Activated CD8-positive, alpha-beta T cell treated with anti-CD3 and anti-CD28 coated beads for 36 hours (primary cell): ENCODE measurements at regions of chr2 and their contacts with region 1.

Region 1: GRCh38 chr2:157327621-157328500 is 2.2 kb upstream of the ERMN start:
- DNase-seq: peak; percentile 95
- ATAC-seq: peak; percentile 93
- H3K4me3 Mint-ChIP-seq: peak overlapping the region; percentile 45
- H3K27ac Mint-ChIP-seq: peak overlapping the region; percentile 80
- H3K4me1 Mint-ChIP-seq: peaks cover 59% of the 10 kb centered on the region
- H3K27me3 Mint-ChIP-seq: no peaks in the 10 kb centered on the region
- CTCF ChIP-seq: peak; percentile 93

Region 2: DNA sequence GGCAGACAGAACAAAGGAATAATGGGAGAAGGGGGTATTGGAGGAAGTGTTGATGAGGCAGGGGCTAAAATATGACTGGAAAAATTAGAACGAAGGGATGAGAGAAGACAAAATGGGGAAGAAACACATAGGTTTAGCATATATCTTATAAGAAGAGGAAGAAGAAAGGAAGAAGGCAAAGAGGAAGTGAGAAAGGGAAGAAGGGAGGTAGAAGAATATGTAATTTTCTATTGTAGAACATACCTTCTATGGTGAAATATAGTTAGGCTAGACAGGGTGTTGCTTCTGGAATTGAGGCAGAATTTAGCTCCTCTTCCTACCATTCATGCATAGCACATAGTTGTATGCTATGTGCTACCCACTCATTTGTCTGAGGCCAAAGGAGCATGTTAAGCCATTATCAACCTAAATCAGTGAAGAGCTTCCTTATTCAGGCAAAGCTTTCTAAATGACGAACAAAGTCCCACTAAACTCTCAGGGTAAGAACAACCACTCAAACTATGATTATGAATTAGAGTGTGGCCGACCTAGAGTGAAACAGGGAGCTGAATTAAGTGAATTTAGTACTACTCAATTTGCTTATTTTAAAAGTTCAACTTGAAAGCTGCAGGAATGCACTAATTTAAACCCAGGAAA is 251.2 kb before region 1 on chr2:
- CTCF ChIA-PET with region 1: no interaction called
- POLR2A ChIA-PET with region 1: no interaction called
- intact Hi-C with region 1: no loop called
- DNase-seq: no peak
- ATAC-seq: no peak
- H3K4me3 Mint-ChIP-seq: no peak overlapping the region
- H3K27ac Mint-ChIP-seq: no peak overlapping the region
- H3K4me1 Mint-ChIP-seq: no peaks in the 10 kb centered on the region
- H3K27me3 Mint-ChIP-seq: no peaks in the 10 kb centered on the region
- CTCF ChIP-seq: no peak

Region 3: DNA sequence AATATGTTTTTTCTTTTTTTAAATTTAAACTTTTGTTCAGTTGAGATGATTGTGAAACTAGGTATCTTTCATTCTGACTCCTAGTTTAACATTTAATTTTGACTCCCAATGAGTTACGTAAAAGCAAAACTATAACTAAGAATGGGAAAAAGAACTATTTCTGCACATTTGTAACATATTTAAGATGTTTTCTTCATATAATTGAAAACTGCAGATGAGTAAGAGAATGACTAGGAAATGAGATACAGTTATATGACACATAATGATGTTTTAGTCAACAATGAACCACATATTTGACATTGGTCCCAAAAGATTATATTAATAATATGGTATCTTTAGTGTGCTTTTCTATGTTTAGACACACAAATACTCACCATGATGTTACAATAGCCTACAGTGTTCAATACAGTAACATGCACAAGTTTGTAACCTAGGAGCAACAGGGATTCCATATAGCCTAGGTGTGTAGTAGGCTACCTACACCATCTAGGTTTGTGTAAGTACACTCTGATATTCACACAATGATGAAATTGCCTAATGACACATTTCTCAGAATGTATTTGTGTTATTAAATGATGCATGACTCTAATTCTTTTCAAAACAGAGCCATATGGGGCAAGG is 14.9 kb before region 1 on chr2:
- CTCF ChIA-PET with region 1: interaction called, 246 read pairs
- POLR2A ChIA-PET with region 1: interaction called, 3 read pairs
- intact Hi-C with region 1: no loop called
- DNase-seq: no peak
- ATAC-seq: peak; percentile 34
- H3K4me3 Mint-ChIP-seq: no peak overlapping the region
- H3K27ac Mint-ChIP-seq: no peak overlapping the region
- H3K4me1 Mint-ChIP-seq: peaks cover 15% of the 10 kb centered on the region
- H3K27me3 Mint-ChIP-seq: no peaks in the 10 kb centered on the region
- CTCF ChIP-seq: no peak

Region 4: DNA sequence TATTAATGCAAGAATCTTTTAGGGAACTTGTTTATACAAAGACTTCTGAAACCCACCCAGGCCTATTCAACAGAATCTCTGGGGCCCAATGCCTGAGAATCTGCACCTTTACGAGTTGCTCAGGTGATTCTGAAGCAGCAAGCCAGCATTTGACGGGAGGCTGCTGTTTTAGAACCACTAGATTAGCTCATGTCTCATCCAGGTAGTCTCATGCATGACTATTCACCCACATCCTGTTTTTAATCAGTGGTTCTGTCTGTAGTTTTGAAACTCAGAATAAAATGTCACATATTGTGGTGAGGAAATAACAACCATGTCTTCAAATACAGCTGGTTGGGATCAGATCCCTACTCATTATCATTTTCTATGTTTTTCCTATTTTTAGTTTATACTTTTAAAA is 76.5 kb after region 1 on chr2:
- CTCF ChIA-PET with region 1: interaction called, 172 read pairs
- POLR2A ChIA-PET with region 1: interaction called, 8 read pairs
- intact Hi-C with region 1: no loop called
- DNase-seq: peak; percentile 78
- ATAC-seq: peak; percentile 89
- H3K4me3 Mint-ChIP-seq: peak overlapping the region; percentile 36
- H3K27ac Mint-ChIP-seq: peak overlapping the region; percentile 93
- H3K4me1 Mint-ChIP-seq: peaks cover 77% of the 10 kb centered on the region
- H3K27me3 Mint-ChIP-seq: no peaks in the 10 kb centered on the region
- CTCF ChIP-seq: no peak

Region 5: DNA sequence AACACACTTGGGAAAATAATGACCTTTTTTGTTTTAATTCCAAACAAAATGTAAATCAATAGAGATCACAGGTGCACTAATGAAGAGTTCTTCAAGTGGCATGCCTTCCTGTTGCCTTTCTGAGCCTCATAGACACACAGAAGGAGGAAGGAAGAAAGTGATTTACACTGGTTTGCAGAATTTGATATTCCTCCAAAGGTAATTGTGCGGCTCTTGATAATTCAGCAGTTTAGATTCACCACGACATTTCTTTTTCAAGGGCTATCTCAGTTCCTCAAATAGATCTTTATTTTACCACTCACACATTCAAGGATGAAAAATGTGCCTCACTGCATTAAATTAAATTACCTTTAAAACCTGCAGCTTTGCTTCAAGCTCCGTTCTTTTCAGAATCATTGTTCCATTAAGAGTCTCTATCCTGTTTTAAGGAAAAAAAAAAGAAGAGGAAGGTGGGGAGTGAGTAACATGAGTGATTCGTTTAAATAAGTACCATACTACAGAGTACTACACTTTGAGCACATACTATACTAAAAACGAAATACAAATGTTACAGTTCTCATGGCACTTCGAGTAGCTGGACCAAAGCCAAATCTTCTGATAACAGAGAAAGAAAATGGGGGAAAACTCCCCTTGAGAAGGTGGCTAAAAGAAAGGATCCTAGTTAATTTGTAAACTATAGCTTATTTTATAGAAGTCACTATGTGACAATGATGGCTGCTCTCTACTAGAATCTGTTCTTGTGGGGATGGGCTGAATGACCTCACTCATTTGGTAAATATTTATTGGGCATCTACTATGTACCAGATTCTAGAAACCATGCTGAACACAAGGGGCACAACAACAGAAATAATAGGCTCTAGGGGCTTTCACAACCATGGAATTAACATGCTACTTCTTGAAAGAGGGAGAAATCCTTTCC is 99.4 kb after region 1 on chr2:
- CTCF ChIA-PET with region 1: interaction called, 49 read pairs
- POLR2A ChIA-PET with region 1: interaction called, 51 read pairs
- intact Hi-C with region 1: no loop called
- DNase-seq: no peak
- ATAC-seq: peak; percentile 16
- H3K4me3 Mint-ChIP-seq: peak overlapping the region; percentile 90
- H3K27ac Mint-ChIP-seq: peak overlapping the region; percentile 94
- H3K4me1 Mint-ChIP-seq: peaks cover 82% of the 10 kb centered on the region
- H3K27me3 Mint-ChIP-seq: no peaks in the 10 kb centered on the region
- CTCF ChIP-seq: no peak

Region 6: DNA sequence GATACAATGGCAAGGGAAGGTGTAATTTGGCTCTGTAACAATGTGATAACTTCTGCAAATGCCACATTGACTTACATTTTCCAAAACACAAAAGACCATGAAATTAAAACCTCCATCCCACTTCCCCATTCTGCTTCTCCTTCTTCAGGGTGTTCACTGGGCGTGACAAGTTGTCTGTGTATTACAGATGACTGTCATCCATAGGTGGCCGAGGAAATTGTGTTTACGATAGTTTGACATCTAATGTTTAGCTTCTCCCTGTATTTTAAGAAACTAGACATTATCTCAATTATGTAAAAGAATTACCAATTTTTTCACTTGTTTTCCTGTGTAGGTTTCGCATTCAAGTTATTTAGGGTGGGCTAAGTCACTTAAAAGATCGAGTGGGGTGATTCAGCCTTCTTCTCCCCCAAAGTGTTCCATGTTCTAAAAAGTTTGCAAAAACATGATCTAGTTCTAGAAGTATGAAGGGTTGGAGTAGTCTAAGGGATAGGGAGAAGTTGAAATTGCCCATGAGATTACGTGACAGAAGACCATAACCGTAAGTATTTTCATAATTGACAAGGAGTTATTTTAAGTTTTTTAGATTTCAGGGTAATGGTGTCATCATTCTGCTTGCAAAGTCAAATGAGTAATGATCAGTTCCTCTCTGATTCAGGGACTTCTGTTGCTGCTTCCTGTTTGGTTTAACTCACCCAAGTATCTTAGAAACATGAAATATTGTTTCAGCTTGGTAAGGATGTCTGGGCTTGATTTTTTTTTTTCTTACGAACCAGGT is 141.3 kb after region 1 on chr2:
- CTCF ChIA-PET with region 1: interaction called, 12 read pairs
- POLR2A ChIA-PET with region 1: interaction called, 3 read pairs
- intact Hi-C with region 1: no loop called
- DNase-seq: no peak
- ATAC-seq: peak; percentile 73
- H3K4me3 Mint-ChIP-seq: peak overlapping the region; percentile 77
- H3K27ac Mint-ChIP-seq: peak overlapping the region; percentile 99
- H3K4me1 Mint-ChIP-seq: peaks cover 93% of the 10 kb centered on the region
- H3K27me3 Mint-ChIP-seq: no peaks in the 10 kb centered on the region
- CTCF ChIP-seq: no peak

Region 7: GRCh38 chr2:157596992-157597681 is 269.3 kb after region 1 on chr2:
- CTCF ChIA-PET with region 1: interaction called, 16 read pairs
- POLR2A ChIA-PET with region 1: no interaction called
- intact Hi-C with region 1: no loop called
- DNase-seq: peak; percentile 71
- ATAC-seq: peak; percentile 90
- H3K4me3 Mint-ChIP-seq: peak overlapping the region; percentile 55
- H3K27ac Mint-ChIP-seq: no peak overlapping the region
- H3K4me1 Mint-ChIP-seq: peaks cover 10% of the 10 kb centered on the region
- H3K27me3 Mint-ChIP-seq: peaks cover 11% of the 10 kb centered on the region
- CTCF ChIP-seq: peak; percentile 71